Right ventricle myocardium inferior (tissue), 1 donor: ENCODE measurements at regions of chr6 and their contacts with region 1.

Region 1: GRCh38 chr6:128807577-128807976 is 75.4 kb upstream of the LAMA2 start:
- DNase-seq: no peak
- ATAC-seq: no peak

Region 2: DNA sequence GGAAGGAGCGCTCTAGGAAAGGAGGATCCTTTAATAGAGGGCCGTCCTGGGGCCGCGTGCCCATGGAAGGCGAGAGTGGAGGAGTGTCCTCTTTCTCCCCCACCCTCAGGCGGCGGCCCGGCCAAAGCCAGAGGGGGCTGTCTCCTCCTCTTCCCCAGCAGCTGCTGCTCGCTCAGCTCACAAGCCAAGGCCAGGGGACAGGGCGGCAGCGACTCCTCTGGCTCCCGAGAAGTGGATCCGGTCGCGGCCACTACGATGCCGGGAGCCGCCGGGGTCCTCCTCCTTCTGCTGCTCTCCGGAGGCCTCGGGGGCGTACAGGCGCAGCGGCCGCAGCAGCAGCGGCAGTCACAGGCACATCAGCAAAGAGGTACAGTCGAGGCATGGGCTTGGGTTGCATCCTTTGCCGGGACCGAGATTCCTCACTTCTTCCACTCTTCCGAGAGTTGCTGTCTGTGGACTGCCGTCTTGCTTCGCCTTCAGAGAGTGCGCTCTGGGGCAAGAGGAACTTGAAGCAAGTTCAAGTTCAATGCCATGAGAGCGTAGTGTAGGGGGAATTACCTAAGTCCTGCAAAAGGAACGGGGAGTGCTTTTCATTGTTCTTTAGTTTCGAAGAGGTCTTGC is 75.5 kb after region 1 on chr6 and contains the start of gene LAMA2:
- intact Hi-C with region 1: loop called (anchors 5 kb)
- DNase-seq: peak; percentile 94
- ATAC-seq: peak; percentile 99
- total RNA-seq, gene LAMA2: 119 TPM

Region 3: GRCh38 chr6:129130959-129131681 is 323.5 kb after region 1 on chr6:
- intact Hi-C with region 1: loop called (anchors 5 kb)
- DNase-seq: peak; percentile 73
- ATAC-seq: peak; percentile 84

Region 4: GRCh38 chr6:129251669-129252376 is 444.2 kb after region 1 on chr6:
- intact Hi-C with region 1: loop called (anchors 5 kb)
- DNase-seq: no peak
- ATAC-seq: no peak

Region 5: DNA sequence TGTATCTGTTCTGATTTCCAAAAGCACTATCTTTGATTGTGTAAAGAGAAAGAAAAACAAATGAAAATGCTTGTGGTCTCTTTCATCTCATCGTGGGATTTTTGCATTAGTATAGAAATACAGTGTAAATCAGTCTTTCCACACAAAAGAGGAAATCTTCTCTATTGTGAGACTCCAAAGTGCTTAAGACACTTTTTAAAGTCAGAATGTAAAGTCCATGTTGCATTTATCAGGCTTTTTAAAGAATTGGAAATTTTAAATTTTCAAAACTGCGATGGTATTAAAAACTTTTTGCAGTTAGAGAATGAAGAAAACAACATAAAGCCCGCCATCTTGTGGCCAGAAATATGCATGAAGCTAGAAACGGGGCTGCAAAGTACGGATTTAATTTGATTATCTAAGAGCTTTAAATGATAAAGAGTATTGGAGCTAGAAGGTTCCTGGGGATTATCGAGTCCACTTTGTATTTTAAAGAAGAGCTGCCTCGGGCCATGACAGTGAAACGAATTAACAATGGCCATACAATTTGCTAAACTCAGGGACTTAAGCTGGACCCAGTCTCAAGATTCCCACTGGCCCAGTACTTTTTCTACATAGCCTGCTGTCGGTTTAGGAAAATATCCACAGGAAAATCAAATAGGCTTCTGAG is 562.8 kb after region 1 on chr6:
- intact Hi-C with region 1: loop called (anchors 10 kb)
- DNase-seq: no peak
- ATAC-seq: no peak